CD4-positive, alpha-beta memory T cell (primary cell): ENCODE measurements at regions of chr9 and their contacts with region 1.

Region 1: GRCh38 chr9:70484210-70485130 is 70.0 kb upstream of the KLF9 start:
- DNase-seq: peak in 4 of 5 donors; percentile 32 to 48 (median 38)
- H3K4me3 ChIP-seq: no peak overlapping the region
- H3K4me3 Mint-ChIP-seq: no peak overlapping the region
- H3K27ac ChIP-seq: no peak overlapping the region
- H3K27ac Mint-ChIP-seq: peak overlapping the region in 2 of 7 donors; percentile 67 to 70
- H3K4me1 ChIP-seq: peaks cover 7% of the 10 kb centered on the region
- H3K4me1 Mint-ChIP-seq: peaks cover 0 to 7% (median 2%) of the 10 kb centered on the region in 4 donors
- H3K27me3 ChIP-seq: no peaks in the 10 kb centered on the region
- H3K27me3 Mint-ChIP-seq: peaks cover 0 to 3% of the 10 kb centered on the region in 2 donors

Region 2: GRCh38 chr9:69805962-69806515 is 678.4 kb before region 1 on chr9:
- CTCF ChIA-PET with region 1: no interaction called
- POLR2A ChIA-PET with region 1: no interaction called
- intact Hi-C with region 1: no loop called
- DNase-seq: no peak
- H3K4me3 ChIP-seq: no peak overlapping the region
- H3K4me3 Mint-ChIP-seq: no peak overlapping the region
- H3K27ac ChIP-seq: no peak overlapping the region
- H3K27ac Mint-ChIP-seq: no peak overlapping the region
- H3K4me1 ChIP-seq: no peaks in the 10 kb centered on the region
- H3K4me1 Mint-ChIP-seq: no peaks in the 10 kb centered on the region
- H3K27me3 ChIP-seq: no peaks in the 10 kb centered on the region
- H3K27me3 Mint-ChIP-seq: peaks cover 3 to 10% of the 10 kb centered on the region in 2 donors

Region 3: GRCh38 chr9:70340572-70340971 is 143.9 kb before region 1 on chr9:
- CTCF ChIA-PET with region 1: interaction called, 22 read pairs
- POLR2A ChIA-PET with region 1: no interaction called
- intact Hi-C with region 1: loop called (anchors 1 kb)
- DNase-seq: peak in 4 of 5 donors; percentile 13 to 18 (median 16)
- H3K4me3 ChIP-seq: no peak overlapping the region
- H3K4me3 Mint-ChIP-seq: no peak overlapping the region
- H3K27ac ChIP-seq: no peak overlapping the region
- H3K27ac Mint-ChIP-seq: no peak overlapping the region
- H3K4me1 ChIP-seq: peaks cover 3% of the 10 kb centered on the region
- H3K4me1 Mint-ChIP-seq: peaks cover 0 to 4% (median 2%) of the 10 kb centered on the region in 4 donors
- H3K27me3 ChIP-seq: no peaks in the 10 kb centered on the region
- H3K27me3 Mint-ChIP-seq: no peaks in the 10 kb centered on the region

Region 4: DNA sequence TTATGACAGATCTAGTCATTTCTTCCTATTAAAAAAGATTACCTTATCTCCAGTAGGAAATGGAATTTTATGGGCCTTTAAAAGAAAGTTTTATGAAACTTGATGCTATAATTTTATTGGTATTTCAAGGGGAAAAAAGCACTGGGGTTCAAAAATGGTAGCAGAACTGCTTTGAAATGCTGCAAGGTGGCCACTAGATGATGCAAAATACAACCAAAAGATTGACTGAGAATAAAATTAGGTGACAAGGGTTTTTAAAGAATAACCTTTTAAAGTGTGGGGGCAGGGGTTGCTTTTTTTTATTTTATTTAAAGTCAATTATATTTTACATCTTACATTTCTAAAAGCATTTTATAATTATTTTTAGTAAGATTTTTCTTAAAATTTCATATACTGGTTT is 131.7 kb before region 1 on chr9:
- CTCF ChIA-PET with region 1: interaction called, 21 read pairs
- POLR2A ChIA-PET with region 1: no interaction called
- intact Hi-C with region 1: loop called (anchors 1 kb)
- DNase-seq: peak in 4 of 5 donors; percentile 14 to 31 (median 24)
- H3K4me3 ChIP-seq: no peak overlapping the region
- H3K4me3 Mint-ChIP-seq: no peak overlapping the region
- H3K27ac ChIP-seq: no peak overlapping the region
- H3K27ac Mint-ChIP-seq: peak overlapping the region in 1 of 7 donors; percentile 11
- H3K4me1 ChIP-seq: no peaks in the 10 kb centered on the region
- H3K4me1 Mint-ChIP-seq: peaks cover 0 to 2% (median under 1%) of the 10 kb centered on the region in 4 donors
- H3K27me3 ChIP-seq: no peaks in the 10 kb centered on the region
- H3K27me3 Mint-ChIP-seq: no peaks in the 10 kb centered on the region

Region 5: DNA sequence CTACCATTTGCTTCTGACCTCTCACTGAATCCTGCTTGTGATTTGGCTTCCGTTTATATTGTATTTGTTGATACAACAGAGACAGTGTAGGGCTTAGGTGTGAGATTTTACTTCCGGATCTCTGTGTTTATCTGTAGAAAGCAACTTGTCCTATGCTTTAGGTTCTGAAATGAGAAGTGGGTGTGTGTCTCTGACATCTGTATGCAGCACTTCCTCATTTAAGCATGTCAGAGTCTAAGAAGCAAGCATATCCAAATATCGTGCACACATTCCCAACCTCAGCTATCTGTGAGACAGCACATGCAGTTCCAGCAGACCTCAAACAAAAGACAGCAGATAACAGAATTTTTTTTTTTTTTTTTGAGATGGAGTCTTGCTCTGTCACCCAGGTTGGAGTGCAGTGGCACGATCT is 86.3 kb before region 1 on chr9:
- CTCF ChIA-PET with region 1: no interaction called
- POLR2A ChIA-PET with region 1: no interaction called
- intact Hi-C with region 1: loop called (anchors 5 kb)
- DNase-seq: peak; percentile 42 to 56 (median 54)
- H3K4me3 ChIP-seq: peak overlapping the region in 1 of 2 donors; percentile 0
- H3K4me3 Mint-ChIP-seq: peak overlapping the region; percentile 60 to 81 (median 76)
- H3K27ac ChIP-seq: peak overlapping the region; percentile 46
- H3K27ac Mint-ChIP-seq: peak overlapping the region; percentile 53 to 92 (median 78)
- H3K4me1 ChIP-seq: peaks cover 83% of the 10 kb centered on the region
- H3K4me1 Mint-ChIP-seq: peaks cover 53 to 82% (median 68%) of the 10 kb centered on the region in 4 donors
- H3K27me3 ChIP-seq: no peaks in the 10 kb centered on the region
- H3K27me3 Mint-ChIP-seq: no peaks in the 10 kb centered on the region